A673 (cell line): ENCODE measurements at regions of chr12 and their contacts with region 1.

Region 1: GRCh38 chr12:96061864-96062453 is 26.6 kb upstream of the LTA4H start:
- DNase-seq: peak; percentile 88
- H3K4me3 ChIP-seq: no peak overlapping the region
- H3K27ac ChIP-seq: no peak overlapping the region
- H3K4me1 ChIP-seq: no peaks in the 10 kb centered on the region
- H3K27me3 ChIP-seq: no peaks in the 10 kb centered on the region
- CTCF ChIP-seq: peak; percentile 85

Region 2: DNA sequence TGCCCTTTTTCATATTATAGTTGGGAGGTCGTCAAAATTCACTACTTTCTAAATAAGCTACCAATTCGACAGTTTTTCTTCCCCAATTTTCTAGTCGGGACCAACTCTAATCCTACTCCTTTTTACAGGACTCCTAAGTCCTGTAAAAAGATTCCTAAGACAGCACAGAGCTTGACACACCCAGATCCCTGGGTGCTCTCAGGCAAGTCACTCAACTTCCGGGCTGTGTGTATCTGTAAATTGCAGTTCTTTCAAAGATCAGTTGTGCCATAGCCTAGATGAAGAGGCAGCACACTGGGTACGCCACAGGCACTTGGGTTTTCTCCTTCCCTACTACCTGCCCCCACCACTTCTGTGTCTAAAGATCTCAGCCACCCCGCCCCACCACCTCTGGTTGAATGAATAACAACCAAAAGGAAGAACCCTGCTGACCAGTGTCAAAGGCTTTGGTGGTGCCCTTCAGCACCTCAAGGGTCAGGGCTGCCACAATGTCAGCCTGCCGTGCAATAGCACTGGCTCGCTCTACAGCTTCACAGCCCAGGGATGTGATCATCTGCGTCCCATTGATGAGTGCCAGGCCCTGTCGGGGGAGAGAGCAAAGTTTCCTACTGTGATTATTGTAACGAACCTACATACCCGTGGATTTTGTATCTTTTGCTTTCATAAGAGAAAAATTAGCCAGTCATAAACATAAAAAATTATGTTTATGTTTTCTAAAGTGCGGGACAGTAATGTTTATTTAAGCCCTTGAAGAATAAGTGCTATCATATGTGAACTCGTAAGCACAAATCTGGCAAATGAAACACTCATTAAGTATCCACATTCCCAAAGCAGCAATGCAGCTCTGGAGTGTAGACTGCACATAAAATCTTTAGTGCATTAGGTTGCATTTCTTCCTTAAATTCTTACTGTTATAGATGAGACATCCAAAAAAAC is 75.1 kb before region 1 on chr12:
- CTCF ChIA-PET with region 1: no interaction called
- POLR2A ChIA-PET with region 1: no interaction called
- intact Hi-C with region 1: no loop called
- DNase-seq: no peak
- H3K4me3 ChIP-seq: no peak overlapping the region
- H3K27ac ChIP-seq: no peak overlapping the region
- H3K4me1 ChIP-seq: peaks cover 16% of the 10 kb centered on the region
- H3K27me3 ChIP-seq: no peaks in the 10 kb centered on the region
- CTCF ChIP-seq: no peak

Region 3: GRCh38 chr12:96194971-96195844 is 133.2 kb after region 1 on chr12:
- CTCF ChIA-PET with region 1: no interaction called
- POLR2A ChIA-PET with region 1: no interaction called
- intact Hi-C with region 1: loop called (anchors 5 kb)
- DNase-seq: peak; percentile 94
- H3K4me3 ChIP-seq: peak overlapping the region; percentile 92
- H3K27ac ChIP-seq: peak overlapping the region; percentile 97
- H3K4me1 ChIP-seq: peaks cover 44% of the 10 kb centered on the region
- H3K27me3 ChIP-seq: no peaks in the 10 kb centered on the region
- CTCF ChIP-seq: no peak

Region 4: DNA sequence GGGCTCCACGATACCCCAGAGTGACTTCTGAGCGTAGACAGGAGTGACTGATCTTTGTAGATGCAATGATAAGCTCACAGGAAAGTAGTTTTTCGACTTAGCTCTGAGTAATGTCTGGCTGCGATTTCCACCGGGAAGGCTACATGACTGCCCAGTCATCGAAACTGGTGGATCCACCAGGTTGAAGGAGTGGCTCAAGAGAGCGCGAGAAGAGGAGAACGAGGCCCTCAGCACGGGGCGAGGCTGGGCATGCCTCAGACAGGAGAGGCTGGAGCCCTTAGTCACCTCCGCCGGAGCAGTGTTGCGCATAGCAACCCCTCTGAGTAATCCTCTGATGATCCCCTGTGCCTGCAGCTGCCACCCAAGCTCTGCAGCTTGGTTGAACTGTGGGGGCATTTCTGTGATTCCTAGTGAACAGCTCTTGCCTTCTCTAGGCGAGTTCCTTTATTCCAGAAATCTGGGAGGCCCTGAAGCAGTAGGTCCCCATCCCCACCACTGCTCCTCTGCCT is 157.8 kb after region 1 on chr12:
- CTCF ChIA-PET with region 1: interaction called, 11 read pairs
- POLR2A ChIA-PET with region 1: no interaction called
- intact Hi-C with region 1: loop called (anchors 1 kb)
- DNase-seq: no peak
- H3K4me3 ChIP-seq: no peak overlapping the region
- H3K27ac ChIP-seq: no peak overlapping the region
- H3K4me1 ChIP-seq: peaks cover 8% of the 10 kb centered on the region
- H3K27me3 ChIP-seq: no peaks in the 10 kb centered on the region
- CTCF ChIP-seq: no peak